Activated CD4-positive, alpha-beta T cell treated with anti-CD3 and anti-CD28 coated beads, Interleukin-2, amount 10 ng/mL, durations not matched to agents 7 days and 5 days (primary cell): ENCODE measurements at regions of chr11 and their contacts with region 1.

Region 1: GRCh38 chr11:118156531-118157185 is 4.0 kb upstream of the SCN4B start:
- DNase-seq: peak; percentile 19
- H3K4me3 Mint-ChIP-seq: no peak overlapping the region
- H3K27ac Mint-ChIP-seq: no peak overlapping the region
- H3K4me1 Mint-ChIP-seq: peaks cover 18% of the 10 kb centered on the region
- H3K27me3 Mint-ChIP-seq: peaks cover 82% of the 10 kb centered on the region

Region 2: GRCh38 chr11:118060869-118061268 is 95.8 kb before region 1 on chr11:
- CTCF ChIA-PET with region 1: no interaction called
- POLR2A ChIA-PET with region 1: no interaction called
- DNase-seq: no peak
- H3K4me3 Mint-ChIP-seq: no peak overlapping the region
- H3K27ac Mint-ChIP-seq: no peak overlapping the region
- H3K4me1 Mint-ChIP-seq: peaks cover 8% of the 10 kb centered on the region
- H3K27me3 Mint-ChIP-seq: no peaks in the 10 kb centered on the region

Region 3: DNA sequence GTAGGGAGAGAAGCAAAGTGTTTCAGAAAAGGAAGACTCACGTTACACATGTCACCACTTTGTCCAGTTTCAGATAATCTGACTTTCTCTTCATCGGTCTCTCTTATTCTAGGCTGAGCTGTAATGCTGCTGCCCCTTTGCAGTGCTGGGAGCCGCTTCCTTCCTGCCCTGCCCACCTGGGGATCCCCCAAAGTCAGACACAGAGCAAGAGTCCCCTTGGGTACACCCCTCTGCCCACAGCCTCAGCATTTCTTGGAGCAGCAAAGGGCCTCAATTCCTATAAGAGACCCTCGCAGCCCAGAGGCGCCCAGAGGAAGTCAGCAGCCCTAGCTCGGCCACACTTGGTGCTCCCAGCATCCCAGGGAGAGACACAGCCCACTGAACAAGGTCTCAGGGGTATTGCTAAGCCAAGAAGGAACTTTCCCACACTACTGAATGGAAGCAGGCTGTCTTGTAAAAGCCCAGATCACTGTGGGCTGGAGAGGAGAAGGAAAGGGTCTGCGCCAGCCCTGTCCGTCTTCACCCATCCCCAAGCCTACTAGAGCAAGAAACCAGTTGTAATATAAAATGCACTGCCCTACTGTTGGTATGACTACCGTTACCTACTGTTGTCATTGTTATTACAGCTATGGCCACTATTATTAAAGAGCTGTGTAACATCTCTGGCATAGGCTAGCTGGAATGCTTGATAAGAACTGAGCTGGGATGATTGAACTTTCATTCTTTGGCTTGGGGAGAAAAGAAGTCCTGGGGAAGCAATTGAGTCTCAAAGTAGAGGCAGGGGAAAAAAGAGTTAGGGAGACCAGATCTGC is 38.7 kb before region 1 on chr11:
- CTCF ChIA-PET with region 1: no interaction called
- POLR2A ChIA-PET with region 1: no interaction called
- DNase-seq: no peak
- H3K4me3 Mint-ChIP-seq: no peak overlapping the region
- H3K27ac Mint-ChIP-seq: no peak overlapping the region
- H3K4me1 Mint-ChIP-seq: peaks cover 13% of the 10 kb centered on the region
- H3K27me3 Mint-ChIP-seq: peaks cover 22% of the 10 kb centered on the region

Region 4: GRCh38 chr11:118171269-118172062 is 14.8 kb after region 1 on chr11:
- CTCF ChIA-PET with region 1: interaction called, 36 read pairs
- POLR2A ChIA-PET with region 1: no interaction called
- DNase-seq: peak; percentile 84
- H3K4me3 Mint-ChIP-seq: no peak overlapping the region
- H3K27ac Mint-ChIP-seq: no peak overlapping the region
- H3K4me1 Mint-ChIP-seq: peaks cover 5% of the 10 kb centered on the region
- H3K27me3 Mint-ChIP-seq: peaks cover 16% of the 10 kb centered on the region

Region 5: DNA sequence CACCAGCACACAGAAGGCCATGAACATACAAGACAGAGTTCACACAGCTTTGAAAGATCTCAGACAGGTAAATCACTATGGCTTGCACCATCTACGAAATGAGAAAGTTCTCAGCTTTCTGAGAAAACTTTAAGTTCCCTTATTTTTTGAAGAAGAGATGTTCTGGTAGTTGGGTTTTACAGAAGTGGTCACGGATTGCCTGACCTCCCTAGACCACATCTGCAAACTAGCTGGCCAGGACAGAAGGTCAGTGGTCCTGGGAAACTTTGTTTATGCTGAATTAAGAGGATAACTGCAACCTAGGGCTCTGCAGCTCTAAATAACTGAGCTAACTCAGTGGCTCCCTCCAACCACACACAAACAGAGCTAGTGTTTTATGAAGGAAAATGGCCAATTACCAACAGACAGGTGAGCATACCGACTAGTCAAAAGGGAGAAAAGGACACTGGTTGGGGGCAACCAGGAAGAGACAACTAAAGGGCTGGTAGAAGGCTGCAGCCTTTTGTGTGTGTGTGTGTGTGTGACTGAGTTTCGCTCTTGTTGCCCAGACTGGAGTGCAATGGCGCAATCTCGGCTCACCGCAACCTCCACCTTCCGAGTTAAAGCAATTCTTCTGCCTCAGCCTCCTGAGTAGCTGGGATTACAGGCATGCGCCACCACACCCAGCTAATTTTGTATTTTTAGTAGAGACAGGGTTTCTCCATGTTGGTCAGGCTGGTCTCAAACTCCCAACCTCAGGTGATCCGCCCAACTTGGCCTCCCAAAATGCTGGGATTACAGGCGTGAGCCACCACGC is 28.3 kb after region 1 on chr11:
- CTCF ChIA-PET with region 1: no interaction called
- POLR2A ChIA-PET with region 1: no interaction called
- DNase-seq: no peak
- H3K4me3 Mint-ChIP-seq: no peak overlapping the region
- H3K27ac Mint-ChIP-seq: no peak overlapping the region
- H3K4me1 Mint-ChIP-seq: peaks cover 6% of the 10 kb centered on the region
- H3K27me3 Mint-ChIP-seq: peaks cover 34% of the 10 kb centered on the region